Activated naive CD4-positive, alpha-beta T cell treated with anti-CD3 and anti-CD28 coated beads for 36 hours (primary cell): ENCODE measurements at regions of chr18 and their contacts with region 1.

Region 1: GRCh38 chr18:58768293-58768974 is 96.2 kb upstream of the ZNF532 start:
- DNase-seq: peak; percentile 84
- H3K4me3 Mint-ChIP-seq: peak overlapping the region; percentile 15
- H3K27ac Mint-ChIP-seq: no peak overlapping the region
- H3K4me1 Mint-ChIP-seq: peaks cover 6% of the 10 kb centered on the region
- H3K27me3 Mint-ChIP-seq: peaks cover 36% of the 10 kb centered on the region

Region 2: GRCh38 chr18:58195278-58195765 is 573.1 kb before region 1 on chr18:
- CTCF ChIA-PET with region 1: interaction called, 3 read pairs
- intact Hi-C with region 1: loop called (anchors 10 kb)
- DNase-seq: peak; percentile 36
- H3K4me3 Mint-ChIP-seq: peak overlapping the region; percentile 80
- H3K27ac Mint-ChIP-seq: peak overlapping the region; percentile 12
- H3K4me1 Mint-ChIP-seq: peaks cover 16% of the 10 kb centered on the region
- H3K27me3 Mint-ChIP-seq: no peaks in the 10 kb centered on the region

Region 3: DNA sequence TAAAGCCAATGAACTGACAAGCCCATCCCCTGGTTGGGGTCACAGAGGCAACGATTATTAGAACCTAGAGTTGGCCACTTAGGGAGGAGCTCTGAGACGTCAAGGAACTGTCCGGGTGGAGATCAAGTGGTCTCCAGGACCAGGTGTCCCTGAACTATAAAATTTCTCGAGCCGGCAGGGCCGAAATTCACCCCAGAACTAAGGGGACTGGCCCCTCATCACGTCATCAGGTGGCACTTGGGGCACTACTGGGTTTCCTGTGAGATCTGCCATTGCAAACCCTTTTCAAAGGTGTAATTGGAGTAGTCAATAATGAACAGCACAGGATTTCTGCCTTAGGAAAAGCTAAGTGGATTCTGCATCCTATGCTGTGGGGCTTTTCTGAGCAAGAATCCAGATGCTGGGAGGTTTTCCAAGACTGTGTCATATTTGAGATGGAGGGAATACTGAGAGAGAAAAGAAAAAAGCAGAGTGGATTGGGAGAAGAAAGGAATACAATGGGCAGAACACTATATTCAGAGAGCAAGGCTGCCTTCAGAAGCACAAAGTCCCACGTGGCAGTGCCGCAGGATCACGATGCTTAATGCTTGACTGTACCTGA is 253.2 kb before region 1 on chr18:
- CTCF ChIA-PET with region 1: interaction called, 22 read pairs
- intact Hi-C with region 1: no loop called
- DNase-seq: no peak
- H3K4me3 Mint-ChIP-seq: no peak overlapping the region
- H3K27ac Mint-ChIP-seq: no peak overlapping the region
- H3K4me1 Mint-ChIP-seq: no peaks in the 10 kb centered on the region
- H3K27me3 Mint-ChIP-seq: no peaks in the 10 kb centered on the region

Region 4: DNA sequence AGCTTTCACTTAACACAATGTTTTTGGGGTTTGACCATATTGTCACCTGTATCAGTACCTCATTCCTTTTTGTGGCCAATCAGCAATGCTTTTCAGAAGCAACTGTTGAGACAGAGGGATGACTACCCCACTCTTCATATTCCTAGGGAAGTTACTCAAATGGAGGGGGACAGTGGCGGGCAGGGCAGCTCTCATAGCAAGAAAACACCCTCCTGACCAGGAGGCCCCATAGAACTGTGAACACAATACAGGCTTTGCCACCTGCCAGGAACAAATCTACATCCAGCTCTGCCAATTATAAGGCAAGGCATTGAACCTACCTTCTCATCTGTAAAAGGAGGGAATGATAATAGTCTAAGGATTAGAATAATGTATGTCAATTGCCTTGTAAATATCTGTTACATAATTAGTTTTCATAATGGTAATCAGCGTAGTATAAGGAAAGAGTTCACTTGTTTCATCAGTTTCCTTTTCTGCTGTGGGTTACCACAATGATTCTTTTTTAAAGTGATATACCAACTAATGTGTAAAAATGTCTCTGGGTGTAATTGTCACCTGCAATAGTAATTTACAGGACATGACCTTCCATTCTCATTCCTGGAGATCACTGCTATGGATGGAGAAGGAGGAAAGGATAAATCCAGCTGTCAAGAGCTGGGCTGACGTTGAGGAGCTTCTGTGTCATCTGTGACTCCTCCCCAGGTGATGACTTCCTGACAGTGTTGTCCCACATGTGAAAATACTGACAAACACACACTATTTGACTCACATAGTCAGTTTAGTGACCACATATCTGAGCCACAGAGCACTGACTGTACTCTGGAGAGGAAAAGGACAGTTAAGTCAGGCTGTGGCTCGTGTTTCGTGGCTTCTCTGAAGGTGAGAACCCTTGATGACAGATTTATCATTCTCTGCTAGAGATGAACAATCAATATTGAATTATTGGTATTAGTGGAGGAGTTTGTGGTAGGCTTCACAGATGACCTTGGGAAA is 153.0 kb before region 1 on chr18:
- CTCF ChIA-PET with region 1: interaction called, 12 read pairs
- intact Hi-C with region 1: loop called (anchors 5 kb)
- DNase-seq: peak; percentile 91
- H3K4me3 Mint-ChIP-seq: peak overlapping the region; percentile 40
- H3K27ac Mint-ChIP-seq: peak overlapping the region; percentile 85
- H3K4me1 Mint-ChIP-seq: peaks cover 46% of the 10 kb centered on the region
- H3K27me3 Mint-ChIP-seq: no peaks in the 10 kb centered on the region

Region 5: GRCh38 chr18:58748899-58749595 is 19.4 kb before region 1 on chr18:
- CTCF ChIA-PET with region 1: interaction called, 87 read pairs
- intact Hi-C with region 1: no loop called
- DNase-seq: no peak
- H3K4me3 Mint-ChIP-seq: no peak overlapping the region
- H3K27ac Mint-ChIP-seq: no peak overlapping the region
- H3K4me1 Mint-ChIP-seq: no peaks in the 10 kb centered on the region
- H3K27me3 Mint-ChIP-seq: no peaks in the 10 kb centered on the region

Region 6: DNA sequence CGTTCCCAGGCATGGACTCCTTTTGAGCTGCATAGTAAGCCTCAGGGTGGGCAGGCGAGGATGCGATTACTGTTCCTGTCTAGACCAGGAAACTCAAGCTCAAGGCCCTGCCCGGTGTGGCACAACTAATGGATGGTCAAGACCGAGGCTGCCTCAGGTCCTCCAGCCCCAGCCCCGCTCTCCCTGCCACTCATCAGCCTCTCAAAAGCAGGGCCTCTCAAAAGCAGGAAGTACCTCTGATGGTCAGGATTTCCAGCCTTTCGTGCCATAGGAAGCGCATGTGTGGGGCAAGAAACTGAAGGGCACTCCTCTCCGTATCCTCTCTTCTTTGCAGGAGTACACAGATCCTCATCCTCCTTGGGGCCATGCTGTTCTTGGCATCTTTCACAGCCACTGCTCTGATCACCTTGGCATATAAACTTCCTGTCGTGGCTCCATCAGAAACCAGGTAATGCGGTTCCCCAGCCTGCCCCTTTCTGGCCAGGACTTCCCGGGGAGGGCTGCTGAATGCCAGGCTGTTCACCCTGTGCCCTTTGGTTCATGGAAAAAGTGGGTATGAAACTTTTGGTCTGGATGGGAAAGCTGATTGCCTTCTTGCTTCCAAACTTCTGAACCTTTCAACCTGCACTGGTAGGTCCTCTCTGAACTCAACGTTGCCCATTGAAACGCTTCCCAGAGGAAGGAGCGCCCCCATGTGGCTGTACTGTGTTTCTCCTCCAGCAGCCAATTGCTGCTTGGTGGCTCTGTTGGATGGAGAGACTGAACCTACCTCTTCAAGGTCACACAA is 288.5 kb after region 1 on chr18:
- CTCF ChIA-PET with region 1: interaction called, 7 read pairs
- intact Hi-C with region 1: loop called (anchors 1 kb)
- DNase-seq: peak; percentile 89
- H3K4me3 Mint-ChIP-seq: no peak overlapping the region
- H3K27ac Mint-ChIP-seq: no peak overlapping the region
- H3K4me1 Mint-ChIP-seq: no peaks in the 10 kb centered on the region
- H3K27me3 Mint-ChIP-seq: peaks cover 6% of the 10 kb centered on the region